ENCODE measurements at regions of chr14 and their contacts with region 1.

Region 1: DNA sequence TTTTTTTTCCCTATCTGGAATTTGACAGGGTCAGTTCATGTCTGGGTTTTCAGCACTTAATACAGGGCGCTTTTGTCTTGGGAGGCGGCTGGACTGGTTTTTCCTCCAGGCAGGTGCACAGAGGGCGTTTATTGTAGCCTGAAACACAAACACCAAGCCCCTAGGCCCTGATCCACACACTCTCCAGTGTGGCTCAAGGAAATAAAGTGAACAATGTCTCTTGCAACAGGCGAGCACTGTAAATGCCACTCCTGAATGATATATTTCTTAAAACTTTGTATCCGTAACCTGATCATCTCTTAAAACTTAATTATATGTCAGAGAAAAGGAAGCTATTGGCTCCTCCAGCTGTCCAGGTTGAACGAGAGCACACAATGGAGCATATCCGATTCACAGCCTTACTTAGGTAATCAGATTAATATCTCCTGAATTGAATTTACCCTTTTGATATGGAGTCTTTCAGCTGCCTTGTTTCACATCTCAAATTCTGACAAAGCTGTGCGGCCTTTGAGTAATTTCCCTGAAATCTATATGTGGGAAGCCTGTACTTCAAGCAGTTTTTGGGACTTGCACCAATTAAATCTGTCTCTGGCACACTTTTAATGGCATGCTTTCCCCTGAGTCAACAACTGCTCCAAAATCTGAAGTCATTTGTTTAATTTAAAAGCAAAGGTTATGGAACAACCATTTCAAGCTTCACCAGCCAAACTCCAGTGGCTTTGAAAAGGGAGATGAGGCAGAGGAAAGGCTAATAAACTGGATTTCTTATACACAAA is 485.7 kb downstream of the ZFP36L1 start:
- DNase-seq: no peak
- ATAC-seq: no peak
- H3K4me3 ChIP-seq: no peak overlapping the region; the same call in 1 of the 2 replicates
- H3K27ac ChIP-seq: peak overlapping the region; percentile 98
- H3K4me1 ChIP-seq: peaks cover 53% of the 10 kb centered on the region
- H3K27me3 ChIP-seq: no peaks in the 10 kb centered on the region
- CTCF ChIP-seq: no peak
- EP300 ChIP-seq: no peak
- POLR2A ChIP-seq: no peak
- RAD21 ChIP-seq: no peak

Region 2: DNA sequence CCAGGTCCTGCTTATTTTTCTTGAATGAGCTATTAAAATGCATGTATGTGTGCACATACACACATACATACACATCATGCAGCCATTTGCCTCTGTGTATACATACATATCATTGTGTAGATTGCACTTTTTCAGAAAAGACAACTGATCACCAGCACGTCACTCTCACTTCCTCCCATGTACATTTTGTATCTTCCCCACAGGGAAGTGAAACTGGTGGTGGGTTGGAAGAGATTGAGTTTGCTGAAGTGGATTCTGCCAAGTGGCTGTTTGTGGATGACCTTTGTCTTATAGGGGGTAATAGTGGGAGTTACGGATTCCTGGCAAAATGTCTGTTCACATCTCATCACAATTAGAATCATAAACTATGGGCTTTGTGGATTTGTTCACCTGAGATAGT is 39.0 kb before region 1 on chr14:
- CTCF ChIA-PET with region 1: interaction called, 5 read pairs
- POLR2A ChIA-PET with region 1: interaction called, 6 read pairs
- RAD21 ChIA-PET with region 1: interaction called, 21 read pairs
- SMC1A ChIA-PET with region 1: interaction called, 23 read pairs
- in situ Hi-C with region 1: no loop called
- intact Hi-C with region 1: loop called (anchors 5 kb)
- DNase-seq: peak; percentile 93
- ATAC-seq: peak; percentile 84
- H3K4me3 ChIP-seq: no peak overlapping the region
- H3K27ac ChIP-seq: peak overlapping the region; percentile 84
- H3K4me1 ChIP-seq: peaks cover 73% of the 10 kb centered on the region
- H3K27me3 ChIP-seq: no peaks in the 10 kb centered on the region
- CTCF ChIP-seq: no peak
- EP300 ChIP-seq: peak; percentile 93 to 100; a peak in 3 of 4 replicates
- POLR2A ChIP-seq: no peak
- RAD21 ChIP-seq: peak; percentile 22

Region 3: DNA sequence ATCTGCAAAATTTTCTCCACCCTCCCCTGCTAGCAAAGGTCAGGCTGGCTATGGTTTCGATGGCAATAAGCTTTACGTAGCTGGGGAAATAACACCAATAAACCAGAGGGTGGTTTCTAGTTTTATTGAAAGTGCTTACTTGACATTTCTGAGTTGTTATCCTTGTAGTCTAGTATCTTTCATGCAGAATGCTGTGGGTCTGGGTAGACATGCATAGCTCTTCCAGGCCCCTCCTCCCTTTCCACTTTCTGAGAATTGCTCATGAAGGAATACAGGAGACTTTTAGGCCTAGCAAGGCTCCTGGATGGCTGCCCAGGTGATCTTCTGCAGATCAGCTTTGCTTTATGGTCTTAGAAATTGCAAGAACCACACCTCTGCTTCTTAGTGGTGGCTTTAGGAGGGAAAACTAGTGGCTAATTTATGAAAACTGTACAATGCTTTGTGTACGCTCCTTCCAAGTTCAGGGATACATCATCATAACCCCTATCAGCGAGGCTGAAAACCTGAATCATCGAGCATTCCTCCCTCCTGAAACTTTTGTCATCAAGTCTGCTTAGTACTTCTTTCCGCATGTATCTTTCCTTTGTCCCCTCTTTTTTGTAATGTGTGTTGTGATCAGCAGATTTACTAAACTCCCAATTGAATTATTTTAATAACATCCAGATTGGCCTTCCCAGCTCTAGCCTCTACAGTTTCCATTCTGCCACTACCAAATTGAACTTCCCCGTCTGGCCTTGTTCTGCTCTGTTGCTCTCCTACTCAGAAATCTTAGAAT is 14.6 kb before region 1 on chr14:
- CTCF ChIA-PET with region 1: interaction called, 73 read pairs
- POLR2A ChIA-PET with region 1: interaction called, 141 read pairs
- RAD21 ChIA-PET with region 1: interaction called, 343 read pairs
- SMC1A ChIA-PET with region 1: interaction called, 321 read pairs
- in situ Hi-C with region 1: no loop called
- intact Hi-C with region 1: no loop called
- DNase-seq: no peak
- ATAC-seq: peak; percentile 43; the same call in 2 of the 3 replicates
- H3K4me3 ChIP-seq: no peak overlapping the region
- H3K27ac ChIP-seq: peak overlapping the region; percentile 76
- H3K4me1 ChIP-seq: peaks cover 49% of the 10 kb centered on the region
- H3K27me3 ChIP-seq: no peaks in the 10 kb centered on the region
- CTCF ChIP-seq: no peak
- EP300 ChIP-seq: no peak
- POLR2A ChIP-seq: no peak
- RAD21 ChIP-seq: no peak

Region 4: DNA sequence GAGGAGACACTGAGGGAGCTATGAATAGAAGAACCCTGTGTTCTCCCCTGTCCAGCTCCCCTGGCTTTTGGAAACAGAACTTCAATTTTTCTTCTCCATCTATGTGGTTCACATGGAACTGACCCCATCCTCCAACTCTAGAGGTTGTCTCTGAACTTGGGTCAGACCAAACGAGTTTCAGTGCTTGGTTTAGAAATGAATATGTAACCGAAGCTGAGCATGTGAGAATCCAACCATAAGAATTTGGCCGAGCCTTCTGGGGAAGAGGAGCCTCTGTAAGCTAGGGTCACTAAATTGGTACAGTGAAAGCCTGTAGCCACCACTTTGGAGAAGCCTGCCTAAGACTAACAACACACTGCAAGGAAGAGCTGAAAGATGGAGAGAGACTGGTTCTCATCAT is 21.3 kb after region 1 on chr14:
- CTCF ChIA-PET with region 1: interaction called, 7 read pairs
- POLR2A ChIA-PET with region 1: interaction called, 14 read pairs
- RAD21 ChIA-PET with region 1: interaction called, 11 read pairs
- SMC1A ChIA-PET with region 1: interaction called, 44 read pairs
- in situ Hi-C with region 1: no loop called
- intact Hi-C with region 1: no loop called
- DNase-seq: no peak
- ATAC-seq: peak; percentile 85
- H3K4me3 ChIP-seq: no peak overlapping the region
- H3K27ac ChIP-seq: peak overlapping the region; percentile 64
- H3K4me1 ChIP-seq: peaks cover 36% of the 10 kb centered on the region
- H3K27me3 ChIP-seq: no peaks in the 10 kb centered on the region
- CTCF ChIP-seq: no peak
- EP300 ChIP-seq: peak in 1 of 2 experiments; percentile 44; a peak in 1 of 4 replicates
- POLR2A ChIP-seq: no peak
- RAD21 ChIP-seq: peak; percentile 30; the same call in 1 of the 2 replicates

Region 5: GRCh38 chr14:68369281-68370056 is 62.3 kb after region 1 on chr14:
- CTCF ChIA-PET with region 1: interaction called, 17 read pairs
- POLR2A ChIA-PET with region 1: interaction called, 17 read pairs
- RAD21 ChIA-PET with region 1: interaction called, 39 read pairs
- SMC1A ChIA-PET with region 1: interaction called, 151 read pairs
- in situ Hi-C with region 1: no loop called
- intact Hi-C with region 1: loop called (anchors 2 kb)
- DNase-seq: peak; percentile 85
- ATAC-seq: peak; percentile 83
- H3K4me3 ChIP-seq: peak overlapping the region; percentile 24; the same call in 1 of the 2 replicates
- H3K27ac ChIP-seq: peak overlapping the region; percentile 94
- H3K4me1 ChIP-seq: peaks cover 55% of the 10 kb centered on the region
- H3K27me3 ChIP-seq: no peaks in the 10 kb centered on the region
- CTCF ChIP-seq: no peak
- EP300 ChIP-seq: no peak
- POLR2A ChIP-seq: no peak
- RAD21 ChIP-seq: 0 out of 2 replicates have a peak, but pooled peaks have one; percentile 20

Region 6: DNA sequence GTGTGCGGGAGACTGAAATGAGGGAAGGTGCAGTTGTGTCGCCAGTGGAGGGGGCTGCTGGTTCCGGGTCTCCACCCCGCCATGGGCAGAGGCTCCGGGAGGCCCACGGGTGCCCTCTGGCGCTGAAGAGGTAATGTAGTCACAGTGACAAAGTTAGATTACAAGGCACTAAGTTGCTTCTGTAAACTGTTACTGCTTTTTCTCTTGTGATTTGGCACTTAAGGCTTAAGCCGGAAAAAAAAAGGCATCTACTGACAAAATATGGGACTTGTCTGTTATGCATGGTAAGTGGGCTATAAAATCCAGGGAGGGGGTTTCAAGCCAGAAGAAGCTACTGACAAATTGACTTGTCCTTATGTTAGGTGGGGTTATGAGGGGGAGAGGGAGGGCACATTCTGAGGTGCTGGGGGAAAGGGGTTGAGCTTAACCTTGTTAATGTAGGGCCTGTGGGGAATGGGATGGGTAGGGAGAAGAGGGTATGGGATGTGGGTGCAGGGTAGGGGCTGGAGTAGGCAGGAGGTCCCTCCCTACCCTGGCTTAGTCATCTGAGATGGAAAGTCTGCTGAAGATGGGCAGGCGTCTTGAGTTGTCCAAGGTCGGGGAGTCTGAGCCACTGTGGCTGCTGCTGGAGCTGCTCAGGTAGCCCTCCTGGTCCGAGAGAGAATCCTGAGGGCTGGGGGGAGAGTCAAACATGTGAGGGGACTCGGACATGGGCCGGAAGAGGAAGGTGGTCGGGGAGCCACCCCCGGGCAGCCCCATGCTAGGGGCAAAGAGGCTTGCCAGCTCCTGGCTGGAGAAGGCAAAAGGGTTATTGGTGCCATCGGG is 482.0 kb after region 1 on chr14:
- CTCF ChIA-PET with region 1: no interaction called
- POLR2A ChIA-PET with region 1: interaction called, 12 read pairs
- RAD21 ChIA-PET with region 1: interaction called, 11 read pairs
- SMC1A ChIA-PET with region 1: interaction called, 9 read pairs
- in situ Hi-C with region 1: no loop called
- intact Hi-C with region 1: no loop called
- DNase-seq: no peak
- ATAC-seq: peak; percentile 39
- H3K4me3 ChIP-seq: peak overlapping the region; percentile 97
- H3K27ac ChIP-seq: peak overlapping the region; percentile 100
- H3K4me1 ChIP-seq: peaks cover 32% of the 10 kb centered on the region
- H3K27me3 ChIP-seq: no peaks in the 10 kb centered on the region
- CTCF ChIP-seq: peak; percentile 76 to 93 (median 85); a peak in 5 of 6 replicates
- EP300 ChIP-seq: no peak
- POLR2A ChIP-seq: peak; percentile 77
- RAD21 ChIP-seq: peak; percentile 80

Measured in GM12878 (cell line).